ENCODE measurements at regions of chr3 and their contacts with region 1.

Region 1: GRCh38 chr3:88113311-88114162 is 36.2 kb upstream of the C3orf38 start:
- DNase-seq: peak; percentile 55
- ATAC-seq: peak; percentile 93
- H3K4me3 Mint-ChIP-seq: no peak overlapping the region
- H3K27ac Mint-ChIP-seq: no peak overlapping the region
- H3K4me1 Mint-ChIP-seq: peaks cover 2% of the 10 kb centered on the region; the same call in 1 of the 2 replicates
- H3K27me3 Mint-ChIP-seq: no peaks in the 10 kb centered on the region
- CTCF ChIP-seq: peak; percentile 51

Region 2: GRCh38 chr3:88005066-88005465 is 108.5 kb before region 1 on chr3:
- CTCF ChIA-PET with region 1: interaction called, 11 read pairs
- POLR2A ChIA-PET with region 1: no interaction called
- DNase-seq: no peak
- ATAC-seq: no peak
- H3K4me3 Mint-ChIP-seq: no peak overlapping the region
- H3K27ac Mint-ChIP-seq: no peak overlapping the region
- H3K4me1 Mint-ChIP-seq: peaks cover 3% of the 10 kb centered on the region; the same call in 1 of the 2 replicates
- H3K27me3 Mint-ChIP-seq: no peaks in the 10 kb centered on the region
- CTCF ChIP-seq: peak; percentile 22; the same call in 1 of the 2 replicates

Region 3: DNA sequence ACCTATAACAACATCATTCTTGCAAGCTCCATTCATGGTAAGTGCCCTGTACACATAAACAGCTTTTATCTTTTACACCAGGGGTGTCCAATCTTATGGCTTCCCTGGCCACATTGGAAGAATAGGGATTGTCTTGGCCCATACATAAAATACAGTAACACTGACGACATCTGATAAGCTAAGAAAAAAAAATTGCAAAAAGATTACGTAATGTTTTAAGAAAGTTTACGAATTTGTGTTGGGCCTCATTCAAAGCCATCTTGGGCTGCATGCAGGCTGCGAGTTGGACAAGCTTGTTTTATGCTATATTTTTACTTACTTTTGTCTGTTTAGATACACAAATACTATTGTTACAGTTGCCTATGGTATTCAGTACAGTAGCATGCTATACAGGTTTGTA is 22.9 kb before region 1 on chr3:
- CTCF ChIA-PET with region 1: interaction called, 10 read pairs
- POLR2A ChIA-PET with region 1: no interaction called
- DNase-seq: no peak
- ATAC-seq: no peak
- H3K4me3 Mint-ChIP-seq: no peak overlapping the region
- H3K27ac Mint-ChIP-seq: no peak overlapping the region
- H3K4me1 Mint-ChIP-seq: no peaks in the 10 kb centered on the region
- H3K27me3 Mint-ChIP-seq: no peaks in the 10 kb centered on the region
- CTCF ChIP-seq: no peak

Region 4: DNA sequence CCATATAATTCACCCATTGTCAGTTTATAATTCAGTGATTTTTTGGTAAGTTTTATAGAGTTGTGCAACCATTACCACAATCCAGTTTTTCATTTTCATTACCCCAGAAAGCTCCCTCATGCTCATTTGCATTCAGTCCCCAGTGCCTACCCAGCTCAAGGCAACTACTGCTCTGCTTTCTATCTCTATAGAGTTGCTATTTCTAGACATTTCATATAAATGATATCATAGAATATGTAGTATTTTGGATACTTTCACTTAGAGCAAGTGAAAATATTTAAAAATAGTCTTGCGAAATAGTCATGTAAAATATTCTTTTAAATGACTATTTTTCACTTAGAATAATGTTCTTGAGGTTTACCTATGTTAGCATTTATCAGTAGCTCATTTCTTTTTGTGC is 12.4 kb before region 1 on chr3:
- CTCF ChIA-PET with region 1: interaction called, 17 read pairs
- POLR2A ChIA-PET with region 1: no interaction called
- DNase-seq: no peak
- ATAC-seq: no peak
- H3K4me3 Mint-ChIP-seq: no peak overlapping the region
- H3K27ac Mint-ChIP-seq: no peak overlapping the region
- H3K4me1 Mint-ChIP-seq: no peaks in the 10 kb centered on the region
- H3K27me3 Mint-ChIP-seq: no peaks in the 10 kb centered on the region
- CTCF ChIP-seq: no peak

Region 5: GRCh38 chr3:88231207-88231606 is 117.7 kb after region 1 on chr3:
- CTCF ChIA-PET with region 1: no interaction called
- POLR2A ChIA-PET with region 1: no interaction called
- DNase-seq: no peak
- ATAC-seq: 0 out of 2 replicates have a peak, but pooled peaks have one; percentile 34
- H3K4me3 Mint-ChIP-seq: no peak overlapping the region
- H3K27ac Mint-ChIP-seq: no peak overlapping the region; the same call in 1 of the 2 replicates
- H3K4me1 Mint-ChIP-seq: peaks cover 7% of the 10 kb centered on the region
- H3K27me3 Mint-ChIP-seq: no peaks in the 10 kb centered on the region
- CTCF ChIP-seq: no peak